AG04449 (cell line): ENCODE measurements at regions of chr16 and their contacts with region 1.

Region 1: DNA sequence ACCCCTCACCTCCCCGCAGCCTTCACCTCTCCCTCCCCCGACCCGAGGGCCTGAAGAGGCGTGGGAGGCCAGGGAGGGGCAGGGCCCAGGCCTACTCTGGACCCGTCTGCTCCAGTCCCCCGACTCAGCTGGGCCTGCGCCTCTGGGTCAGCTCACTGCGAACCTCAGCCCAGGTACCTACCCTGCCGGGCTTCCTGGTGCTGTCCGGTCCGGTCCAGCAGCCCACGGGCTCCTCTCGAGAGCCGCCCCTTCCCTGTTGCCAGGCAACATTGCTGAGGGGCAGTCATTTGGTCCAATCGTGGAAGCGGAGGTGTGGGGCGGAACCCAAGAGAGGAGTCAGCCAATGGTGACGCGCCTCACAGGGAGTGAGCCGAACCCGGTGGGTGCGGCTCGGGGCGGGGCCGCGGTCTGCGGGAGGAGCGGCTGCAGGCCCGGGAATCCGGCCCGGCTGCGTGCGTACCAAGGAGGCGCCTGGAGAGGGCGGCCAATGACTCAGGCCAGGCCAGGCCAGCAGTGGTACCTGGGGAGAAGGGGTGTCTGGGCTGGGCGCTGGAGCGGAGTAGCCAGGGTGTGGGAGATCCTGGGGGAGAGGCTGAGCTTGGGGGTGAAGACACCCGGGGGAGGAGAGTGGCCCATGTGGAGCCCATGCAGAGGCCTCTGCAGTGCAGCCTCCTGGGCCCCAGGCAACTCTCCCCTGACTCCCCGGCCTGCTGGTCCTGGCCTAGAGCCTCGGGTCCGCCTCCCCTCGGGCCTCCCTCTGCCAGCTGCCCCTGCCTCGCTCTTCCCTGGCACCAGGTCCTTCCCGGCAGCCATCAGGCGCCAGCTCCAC is at the start of gene MEAK7:
- DNase-seq: peak; percentile 77
- H3K4me3 ChIP-seq: peak within 1 kb of the TSS; percentile 100
- CTCF ChIP-seq: peak; percentile 39

Region 2: GRCh38 chr16:84484579-84485254 is 19.9 kb before region 1 on chr16:
- CTCF ChIA-PET with region 1: interaction called, 38 read pairs
- POLR2A ChIA-PET with region 1: no interaction called
- DNase-seq: no peak
- H3K4me3 ChIP-seq: no peak overlapping the region
- CTCF ChIP-seq: peak; percentile 67

Region 3: DNA sequence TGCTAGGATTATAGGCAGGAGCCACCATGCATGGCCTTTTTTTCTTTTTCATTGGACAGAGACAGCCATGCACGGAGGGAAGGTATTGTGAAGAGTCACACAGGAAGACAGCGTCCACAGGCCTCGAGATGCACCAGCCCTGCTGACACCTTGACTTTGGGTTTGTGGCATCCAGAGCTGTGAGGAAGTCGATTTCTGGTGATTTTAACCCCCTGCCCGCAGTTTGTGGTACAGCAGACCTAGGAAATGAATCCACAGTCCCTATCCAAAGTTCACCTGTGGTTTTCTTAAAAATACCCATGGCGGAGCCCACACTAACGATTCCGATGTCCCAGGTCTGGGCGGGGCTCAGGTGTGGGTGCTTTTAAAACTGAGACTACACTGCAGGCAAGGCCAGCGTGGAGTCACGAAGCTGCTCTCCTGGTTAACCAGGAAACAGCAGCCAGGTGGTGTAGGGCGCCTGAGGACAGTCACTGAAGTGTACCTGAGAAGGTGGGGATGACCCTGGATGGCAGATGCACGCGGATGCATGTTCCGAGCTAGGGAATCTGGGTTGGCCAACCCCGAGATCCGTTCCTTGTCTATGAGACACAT is 14.2 kb after region 1 on chr16:
- CTCF ChIA-PET with region 1: interaction called, 45 read pairs
- POLR2A ChIA-PET with region 1: no interaction called
- DNase-seq: no peak
- H3K4me3 ChIP-seq: no peak overlapping the region
- CTCF ChIP-seq: no peak

Region 4: GRCh38 chr16:84532291-84532724 is 27.7 kb after region 1 on chr16:
- CTCF ChIA-PET with region 1: interaction called, 19 read pairs
- POLR2A ChIA-PET with region 1: no interaction called
- DNase-seq: peak; percentile 92
- H3K4me3 ChIP-seq: no peak overlapping the region
- CTCF ChIP-seq: no peak

Region 5: DNA sequence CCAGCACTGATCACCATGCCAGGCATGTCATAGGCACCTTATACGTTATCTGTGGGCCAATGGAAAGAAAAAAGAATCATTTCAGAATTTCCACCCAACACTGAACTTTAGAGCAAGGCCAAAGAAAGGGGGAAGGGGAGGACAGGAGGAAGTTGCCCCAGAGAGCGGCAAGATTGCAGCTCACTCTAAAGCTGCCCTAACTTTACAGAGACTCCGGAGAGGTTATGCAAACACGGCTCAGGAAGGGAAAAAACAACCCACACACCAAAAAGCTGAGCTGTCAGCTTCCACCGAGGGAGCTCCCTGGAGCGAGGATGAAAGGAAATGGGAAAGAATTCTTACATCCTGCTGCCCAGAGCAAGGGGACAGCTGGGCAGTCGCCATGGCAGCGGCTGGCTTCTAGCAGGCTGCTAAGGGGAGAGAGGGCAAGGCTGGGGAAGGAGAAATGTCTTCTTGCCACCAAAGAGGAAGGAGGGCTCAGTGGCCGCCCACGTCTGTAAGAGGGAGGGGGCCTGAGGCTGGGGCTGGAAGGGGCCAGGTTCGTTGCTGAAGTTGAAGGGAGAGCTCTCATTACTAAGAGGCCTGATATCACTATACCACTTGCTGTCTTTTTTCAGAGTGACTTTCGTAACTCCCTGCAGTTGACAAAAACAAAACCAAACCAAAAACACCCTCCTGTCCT is 95.0 kb after region 1 on chr16:
- CTCF ChIA-PET with region 1: interaction called, 21 read pairs
- POLR2A ChIA-PET with region 1: interaction called, 3 read pairs
- DNase-seq: peak; percentile 47
- H3K4me3 ChIP-seq: peak overlapping the region; percentile 31
- CTCF ChIP-seq: no peak